Activated CD4-positive, alpha-beta T cell treated with anti-CD3 and anti-CD28 coated beads, Interleukin-2, amount 10 ng/mL, durations not matched to agents 24 days and 14 days (primary cell): ENCODE measurements at regions of chr1 and their contacts with region 1.

Region 1: GRCh38 chr1:39196244-39197215 is 8.0 kb upstream of the MACF1 start:
- DNase-seq: peak; percentile 87
- H3K4me3 Mint-ChIP-seq: peak overlapping the region; percentile 80
- H3K27ac Mint-ChIP-seq: peak overlapping the region; percentile 96
- H3K4me1 Mint-ChIP-seq: peaks cover 66% of the 10 kb centered on the region
- H3K27me3 Mint-ChIP-seq: no peaks in the 10 kb centered on the region

Region 2: GRCh38 chr1:39098546-39099250 is 97.8 kb before region 1 on chr1:
- intact Hi-C with region 1: loop called (anchors 1 kb)
- DNase-seq: peak; percentile 89
- H3K4me3 Mint-ChIP-seq: no peak overlapping the region
- H3K27ac Mint-ChIP-seq: peak overlapping the region; percentile 31
- H3K4me1 Mint-ChIP-seq: peaks cover 20% of the 10 kb centered on the region
- H3K27me3 Mint-ChIP-seq: no peaks in the 10 kb centered on the region

Region 3: GRCh38 chr1:39115271-39116110 is 81.0 kb before region 1 on chr1:
- intact Hi-C with region 1: loop called (anchors 2 kb)
- DNase-seq: no peak
- H3K4me3 Mint-ChIP-seq: no peak overlapping the region
- H3K27ac Mint-ChIP-seq: no peak overlapping the region
- H3K4me1 Mint-ChIP-seq: peaks cover 6% of the 10 kb centered on the region
- H3K27me3 Mint-ChIP-seq: peaks cover 6% of the 10 kb centered on the region

Region 4: DNA sequence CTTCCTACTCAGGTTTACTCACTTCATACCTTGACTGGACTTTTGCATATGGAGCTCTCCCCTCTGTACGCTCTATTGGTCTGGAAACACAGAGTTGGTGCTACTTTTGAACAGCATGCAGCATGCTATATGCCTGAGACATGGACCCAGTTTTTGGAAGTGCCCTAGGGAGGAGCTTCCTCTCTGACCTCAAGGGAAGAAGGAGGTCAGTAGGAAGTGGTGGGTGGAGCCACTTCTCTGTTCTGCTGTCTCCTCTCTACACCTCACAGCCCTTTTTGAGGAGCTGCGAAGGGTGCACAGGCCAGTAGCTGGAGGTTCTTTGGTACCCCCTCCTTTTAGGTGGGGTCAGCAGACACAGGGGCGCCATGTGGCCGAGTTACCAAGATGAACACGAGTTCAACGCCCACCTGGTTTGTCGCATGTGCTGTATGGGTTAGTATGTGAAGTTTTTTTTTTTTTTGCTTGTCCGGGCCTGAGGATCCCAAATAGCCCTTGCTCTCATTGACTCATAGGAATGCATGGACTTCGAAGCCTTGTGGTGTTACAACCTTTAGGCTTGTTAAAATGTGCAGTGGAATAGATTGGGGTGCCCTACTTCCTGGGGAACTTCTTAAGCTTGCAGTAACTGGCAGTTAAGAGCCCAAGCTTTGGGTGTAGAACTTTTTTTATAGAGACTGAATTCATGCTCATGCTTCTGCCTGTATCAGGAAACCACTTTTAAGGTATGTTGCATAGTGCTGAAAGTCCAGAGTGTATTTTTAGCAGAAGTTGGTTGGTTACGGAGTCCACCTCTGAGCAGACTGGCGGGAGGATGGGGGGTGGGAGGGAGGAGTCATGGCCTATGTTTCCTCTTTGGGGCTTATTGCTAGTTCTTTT is 18.7 kb after region 1 on chr1:
- intact Hi-C with region 1: loop called (anchors 1 kb)
- DNase-seq: peak; percentile 84
- H3K4me3 Mint-ChIP-seq: peak overlapping the region; percentile 82
- H3K27ac Mint-ChIP-seq: peak overlapping the region; percentile 93
- H3K4me1 Mint-ChIP-seq: peaks cover 55% of the 10 kb centered on the region
- H3K27me3 Mint-ChIP-seq: no peaks in the 10 kb centered on the region

Region 5: DNA sequence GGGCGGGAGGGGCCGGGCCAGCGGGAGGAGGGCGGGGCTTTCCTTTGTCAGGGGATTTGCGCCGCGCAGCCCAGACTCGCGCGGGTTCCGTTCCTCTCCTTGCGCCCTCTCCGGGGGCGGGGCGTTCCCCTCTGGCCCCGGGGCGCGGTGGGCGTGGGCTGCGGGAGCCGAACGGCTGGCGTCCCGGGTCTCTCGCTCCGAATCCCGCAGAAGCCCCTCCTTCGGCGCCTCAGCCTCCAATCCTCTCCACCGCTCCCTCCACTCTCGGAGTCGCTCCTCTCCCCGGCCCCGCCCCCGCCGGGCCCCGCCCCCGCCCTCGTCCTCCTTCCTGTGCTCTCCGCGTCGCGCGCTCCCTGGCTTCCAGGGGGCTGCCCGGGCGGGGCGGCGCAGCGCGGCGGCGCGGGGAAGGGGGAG is 212.1 kb after region 1 on chr1:
- intact Hi-C with region 1: loop called (anchors 2 kb)
- DNase-seq: peak; percentile 96
- H3K4me3 Mint-ChIP-seq: peak overlapping the region; percentile 90
- H3K27ac Mint-ChIP-seq: no peak overlapping the region
- H3K4me1 Mint-ChIP-seq: peaks cover 50% of the 10 kb centered on the region
- H3K27me3 Mint-ChIP-seq: no peaks in the 10 kb centered on the region